ENCODE measurements at regions of chr9 and their contacts with region 1.

Region 1: DNA sequence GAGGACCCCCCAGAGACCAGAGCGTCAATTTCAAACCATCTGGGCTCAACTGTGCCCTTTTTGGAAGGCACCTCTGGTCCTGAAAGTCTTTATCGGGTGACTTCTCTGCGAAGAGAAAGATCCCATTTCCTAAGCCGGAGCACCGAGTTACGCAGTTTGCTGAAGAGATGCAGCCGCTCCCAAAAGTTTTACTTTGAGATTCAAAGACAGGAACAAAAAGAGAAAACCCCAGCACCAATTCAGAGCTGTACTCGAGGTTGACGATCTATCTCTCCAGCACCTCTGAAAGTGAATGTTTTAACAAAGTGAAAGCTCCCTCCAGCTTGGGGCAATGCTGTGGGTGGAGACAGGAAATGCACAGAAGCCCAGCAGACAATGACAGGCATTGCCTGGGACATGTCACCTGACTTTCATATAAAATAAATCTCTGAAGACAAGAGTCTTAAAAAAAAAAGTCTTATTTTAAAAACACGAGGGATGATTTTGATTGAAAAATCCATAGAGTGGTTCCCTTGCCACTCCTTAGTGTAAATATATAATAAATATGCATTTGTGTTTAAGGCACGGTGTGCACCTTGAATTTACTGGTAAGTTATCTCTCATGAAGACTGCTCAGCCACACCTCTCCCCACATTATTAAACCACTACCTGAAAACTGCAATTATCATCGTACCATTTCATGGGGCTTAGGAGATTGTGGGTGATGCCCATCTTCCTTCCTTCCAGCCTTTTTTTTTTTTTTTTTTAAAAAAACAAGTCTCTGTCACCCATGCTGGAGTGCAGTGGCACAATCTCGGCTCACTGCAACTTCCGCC is 79.9 kb downstream of the FNBP1 start:
- DNase-seq: peak; percentile 86
- H3K4me3 ChIP-seq: peak overlapping the region; percentile 47
- H3K27ac ChIP-seq: peak overlapping the region; percentile 100
- H3K4me1 ChIP-seq: peaks cover 53% of the 10 kb centered on the region
- H3K27me3 ChIP-seq: no peaks in the 10 kb centered on the region
- CTCF ChIP-seq: no peak

Region 2: GRCh38 chr9:129802851-129803675 is 160.0 kb before region 1 on chr9 and contains the start of gene TOR1B:
- CTCF ChIA-PET with region 1: no interaction called
- POLR2A ChIA-PET with region 1: no interaction called
- intact Hi-C with region 1: loop called (anchors 10 kb)
- DNase-seq: peak; percentile 97
- H3K4me3 ChIP-seq: peak within 1 kb of the TSS; percentile 91
- H3K27ac ChIP-seq: peak within 1 kb of the TSS; percentile 85
- H3K4me1 ChIP-seq: peaks cover 26% of the 10 kb centered on the region
- H3K27me3 ChIP-seq: no peaks in the 10 kb centered on the region
- CTCF ChIP-seq: no peak
- total RNA-seq, gene TOR1B: 47.6 and 50.0 TPM in 2 replicates

Region 3: DNA sequence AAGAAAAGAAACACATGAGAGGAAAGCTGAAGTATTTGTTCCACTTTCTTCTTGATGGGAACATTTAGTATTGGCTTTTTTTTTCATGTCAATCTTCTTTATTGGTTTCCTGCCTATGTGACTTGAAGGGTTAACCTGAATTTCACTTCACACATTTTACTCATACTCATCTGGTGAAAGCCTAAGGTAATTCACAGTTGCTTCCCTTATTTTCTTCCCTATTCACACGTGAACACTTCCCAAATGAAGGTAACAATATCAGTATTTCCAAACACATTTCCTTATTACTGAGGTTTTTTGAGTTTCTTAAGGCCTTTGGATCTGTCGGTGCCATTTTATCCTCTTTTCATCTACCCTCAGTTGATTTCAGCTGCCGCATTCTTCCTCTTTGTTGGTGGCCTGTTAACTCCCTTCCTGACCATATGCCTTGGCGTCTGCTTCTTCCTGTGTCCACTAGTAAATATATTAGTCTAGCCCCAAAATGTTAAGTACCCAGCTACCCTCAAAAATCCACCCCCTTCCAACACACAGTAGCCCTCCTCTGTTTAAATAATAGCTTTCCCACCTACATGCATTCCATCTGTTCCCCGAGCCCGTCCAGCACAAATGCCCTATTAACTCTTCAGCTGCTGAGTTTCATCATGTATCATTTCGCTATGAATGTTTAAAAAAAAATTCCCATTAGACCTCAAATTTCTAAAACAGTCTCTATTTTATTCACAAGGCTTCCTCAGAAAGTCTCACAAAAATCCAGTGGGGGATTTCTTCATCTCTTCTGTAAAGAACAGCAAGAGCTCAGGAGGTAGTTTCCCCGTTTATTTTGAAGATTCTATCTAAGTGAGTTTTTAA is 30.6 kb before region 1 on chr9:
- CTCF ChIA-PET with region 1: no interaction called
- POLR2A ChIA-PET with region 1: interaction called, 12 read pairs
- intact Hi-C with region 1: no loop called
- DNase-seq: no peak
- H3K4me3 ChIP-seq: no peak overlapping the region
- H3K27ac ChIP-seq: peak overlapping the region; percentile 74
- H3K4me1 ChIP-seq: peaks cover 55% of the 10 kb centered on the region
- H3K27me3 ChIP-seq: no peaks in the 10 kb centered on the region
- CTCF ChIP-seq: no peak

Region 4: GRCh38 chr9:130107234-130107861 is 144.3 kb after region 1 on chr9:
- CTCF ChIA-PET with region 1: no interaction called
- POLR2A ChIA-PET with region 1: no interaction called
- intact Hi-C with region 1: no loop called
- DNase-seq: peak; percentile 87
- H3K4me3 ChIP-seq: no peak overlapping the region
- H3K27ac ChIP-seq: no peak overlapping the region
- H3K4me1 ChIP-seq: no peaks in the 10 kb centered on the region
- H3K27me3 ChIP-seq: no peaks in the 10 kb centered on the region
- CTCF ChIP-seq: peak; percentile 93

Measured in A673 (cell line).